GM10248 (cell line): ENCODE measurements at regions of chr3 and their contacts with region 1.

Region 1: GRCh38 chr3:15268033-15268631 is 62.1 kb downstream of the CAPN7 start:
- DNase-seq: peak; percentile 84
- CTCF ChIP-seq: peak; percentile 97

Region 2: DNA sequence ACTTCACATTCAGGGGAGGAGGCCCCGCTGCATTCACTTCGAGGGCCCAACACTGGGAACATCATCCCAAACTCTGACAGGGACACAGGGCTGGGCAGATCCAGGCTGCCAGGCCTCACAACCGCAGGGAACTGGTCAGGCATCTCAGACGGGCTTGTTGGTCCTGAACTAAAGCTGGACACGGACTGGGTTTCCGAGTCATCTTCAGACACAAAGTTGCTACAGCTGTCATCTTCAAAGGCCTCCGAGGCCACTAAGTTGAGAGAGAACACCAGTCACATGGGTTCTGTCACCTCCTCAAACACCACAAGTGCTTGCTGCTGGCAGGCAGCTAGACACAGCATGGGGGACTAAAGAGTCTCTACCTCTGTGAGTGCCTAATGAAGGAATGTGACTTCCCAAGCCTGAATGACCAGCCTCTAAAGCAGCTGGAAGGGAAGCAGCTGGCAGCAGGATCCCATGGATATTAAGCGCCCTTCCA is 11.2 kb before region 1 on chr3:
- CTCF ChIA-PET with region 1: interaction called, 72 read pairs
- POLR2A ChIA-PET with region 1: no interaction called
- DNase-seq: no peak
- CTCF ChIP-seq: no peak

Region 3: DNA sequence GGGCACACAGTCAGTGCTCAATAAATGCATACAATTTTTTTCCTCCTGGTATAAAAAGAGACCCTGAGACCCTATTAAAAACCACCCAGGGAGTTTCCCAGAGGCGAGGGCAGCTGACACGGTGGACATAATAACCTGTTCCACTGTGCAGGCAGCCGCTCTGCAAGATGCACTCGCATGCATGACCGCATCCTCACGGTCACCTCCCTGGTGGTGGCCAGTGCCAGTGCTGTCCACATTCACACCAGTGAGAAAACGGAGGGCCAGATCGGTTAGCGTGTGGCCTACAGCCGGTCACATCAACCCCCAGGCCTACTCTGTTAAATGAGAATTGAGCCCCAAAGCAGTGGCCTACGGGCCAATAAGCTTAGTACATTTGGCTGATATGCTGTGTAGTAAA is 39.4 kb after region 1 on chr3:
- CTCF ChIA-PET with region 1: interaction called, 16 read pairs
- POLR2A ChIA-PET with region 1: no interaction called
- DNase-seq: no peak
- CTCF ChIP-seq: no peak

Region 4: DNA sequence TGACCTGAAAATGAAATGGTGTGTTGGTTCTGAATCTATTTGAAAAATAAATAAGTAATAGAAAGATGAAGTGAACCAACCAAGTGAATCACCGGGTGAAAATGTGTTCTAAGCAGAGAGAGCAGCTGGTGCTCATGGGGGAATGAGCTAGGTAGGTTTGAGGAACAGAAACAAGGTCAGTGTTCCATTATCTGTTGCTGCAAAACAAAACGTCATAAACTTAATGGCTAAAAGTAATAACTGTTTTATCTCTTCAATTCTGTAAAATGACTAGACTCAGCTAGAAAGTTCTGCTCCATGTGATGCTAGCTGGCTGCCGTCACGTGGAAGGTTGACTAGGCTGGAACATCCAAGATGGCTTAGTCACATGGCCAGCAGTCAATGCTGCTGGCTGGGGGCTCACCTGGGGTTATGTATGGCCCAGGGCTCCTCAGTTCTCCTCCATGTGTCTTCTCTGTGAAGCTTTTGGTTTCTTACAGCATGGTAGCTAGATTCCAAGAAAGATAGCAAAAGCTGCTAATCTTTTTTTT is 77.5 kb after region 1 on chr3:
- CTCF ChIA-PET with region 1: interaction called, 10 read pairs
- POLR2A ChIA-PET with region 1: no interaction called
- DNase-seq: peak; percentile 71
- CTCF ChIP-seq: no peak

Region 5: DNA sequence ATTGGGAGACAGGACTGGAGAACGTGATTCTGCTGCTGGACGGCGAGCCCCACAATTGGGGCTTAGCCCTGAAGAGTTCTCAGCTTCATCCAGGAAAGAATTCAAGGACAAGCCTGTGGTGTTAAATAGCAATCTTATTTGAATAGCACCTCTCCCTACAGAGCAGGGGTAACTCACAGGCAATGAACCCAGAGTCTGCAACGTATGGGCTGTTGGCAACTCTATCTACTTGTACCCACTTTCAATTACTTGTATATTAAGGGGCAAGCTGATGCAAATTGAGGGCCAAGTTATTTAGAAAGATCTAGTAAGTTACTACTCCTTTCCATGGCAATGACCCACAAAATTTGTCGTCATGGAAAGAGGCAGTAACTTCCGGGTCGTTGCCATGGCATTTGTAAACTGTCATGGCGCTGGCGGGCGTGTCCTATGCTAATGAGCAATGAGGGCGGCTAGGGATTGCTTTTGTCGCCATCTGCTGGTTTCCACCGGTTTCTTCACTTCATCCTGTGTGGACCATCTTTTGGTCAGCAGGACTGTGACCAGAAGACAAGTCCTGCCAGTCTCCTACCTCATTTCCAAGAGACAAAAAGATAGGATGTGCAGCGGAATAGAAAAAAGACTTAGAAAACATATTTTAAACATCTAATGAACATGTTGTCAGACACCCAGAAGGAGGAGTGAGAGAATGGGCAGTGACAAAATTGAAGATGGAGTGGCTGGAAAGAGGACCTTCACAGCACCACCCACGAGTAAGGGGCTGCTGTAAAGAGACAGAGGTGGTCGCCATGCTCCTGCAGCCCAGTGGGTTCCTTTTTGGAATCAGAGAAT is 110.0 kb after region 1 on chr3:
- CTCF ChIA-PET with region 1: interaction called, 123 read pairs
- POLR2A ChIA-PET with region 1: no interaction called
- DNase-seq: peak; percentile 62
- CTCF ChIP-seq: peak; percentile 74

Region 6: DNA sequence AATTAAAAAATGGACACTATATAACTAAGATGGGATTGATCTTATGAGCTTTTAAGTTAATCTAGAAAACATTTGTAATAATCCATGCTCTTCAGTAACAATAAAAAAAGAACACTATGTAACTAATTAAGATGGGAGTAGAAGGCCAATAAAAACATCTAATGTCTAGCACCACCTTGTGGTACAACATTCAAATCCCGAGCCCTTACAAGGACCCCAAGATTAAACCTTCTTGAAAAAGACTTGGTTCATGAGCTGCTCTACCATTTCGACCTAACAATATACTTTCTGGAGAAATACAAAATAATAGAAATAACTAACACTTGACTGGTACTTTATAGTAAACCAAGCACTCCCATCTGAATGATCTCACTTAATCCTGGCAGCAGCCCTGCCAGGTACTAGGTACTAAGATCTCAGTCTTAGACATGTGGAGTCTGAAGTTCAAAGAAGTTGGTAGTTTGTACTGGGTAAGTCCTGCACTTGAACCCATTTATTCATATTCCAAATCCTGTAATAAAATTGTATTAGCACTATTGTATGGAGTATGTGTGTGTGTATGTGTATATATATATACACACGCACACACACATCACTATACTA is 137.4 kb after region 1 on chr3:
- CTCF ChIA-PET with region 1: interaction called, 151 read pairs
- POLR2A ChIA-PET with region 1: interaction called, 5 read pairs
- DNase-seq: peak; percentile 58
- CTCF ChIP-seq: peak; percentile 63